ENCODE measurements at regions of chr17 and their contacts with region 1.

Region 1: DNA sequence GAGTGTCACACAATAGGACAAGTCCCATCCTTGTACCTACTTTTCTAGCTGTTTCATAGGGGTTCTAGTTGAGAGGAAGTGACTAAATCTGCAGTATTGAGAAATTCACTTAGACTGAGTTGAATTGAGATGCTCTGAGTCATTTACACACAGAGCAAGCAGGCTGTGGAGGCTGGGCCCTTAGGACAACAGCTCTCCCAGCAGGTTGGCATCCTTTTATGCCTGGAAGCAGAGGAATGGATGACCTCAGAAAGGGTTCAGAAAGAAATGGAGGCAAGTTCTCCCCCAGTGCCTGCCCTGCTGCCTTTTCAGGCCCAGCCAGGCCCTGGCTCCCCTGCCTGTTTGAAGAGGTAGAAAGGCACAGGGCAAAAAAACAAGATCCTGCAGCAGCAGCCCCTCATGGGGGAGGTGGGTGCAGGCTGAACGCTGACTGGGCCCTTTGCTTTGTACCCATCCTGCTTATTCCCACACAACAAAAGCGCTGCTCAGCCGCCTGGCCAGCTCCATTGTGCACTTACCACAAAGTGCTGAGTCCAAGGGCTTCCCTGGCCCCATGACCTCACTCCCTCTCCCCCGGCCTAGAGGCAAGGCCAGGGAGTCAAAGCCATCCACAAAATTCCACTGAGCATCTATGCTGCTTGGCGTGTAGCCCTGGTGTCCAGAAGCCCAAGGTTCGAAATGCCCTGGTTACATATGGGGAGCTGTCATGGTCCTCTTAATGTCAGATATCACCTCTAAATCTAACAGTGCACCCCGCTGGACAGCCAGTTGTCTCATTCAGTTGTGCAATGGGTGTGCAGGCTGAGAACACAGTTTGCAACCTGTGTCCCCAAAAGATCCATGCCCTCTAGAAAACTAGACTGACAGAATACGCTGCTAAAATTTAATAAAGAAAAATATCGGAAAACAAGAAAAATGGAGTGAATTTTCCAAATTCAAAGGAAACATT is 5.4 kb upstream of the CRYBA1 start:
- DNase-seq: peak; percentile 87
- ATAC-seq: peak; percentile 99
- H3K4me3 ChIP-seq: no peak overlapping the region
- H3K27ac ChIP-seq: peak overlapping the region; percentile 60
- H3K4me1 ChIP-seq: peaks cover 16% of the 10 kb centered on the region
- H3K27me3 ChIP-seq: no peaks in the 10 kb centered on the region
- CTCF ChIP-seq: no peak

Region 2: GRCh38 chr17:29252101-29252866 is 11.0 kb after region 1 on chr17:
- CTCF ChIA-PET with region 1: interaction called, 12 read pairs
- POLR2A ChIA-PET with region 1: no interaction called
- intact Hi-C with region 1: no loop called
- DNase-seq: peak; percentile 36
- ATAC-seq: no peak; the same call in 1 of the 2 replicates
- H3K4me3 ChIP-seq: no peak overlapping the region
- H3K27ac ChIP-seq: no peak overlapping the region
- H3K4me1 ChIP-seq: no peaks in the 10 kb centered on the region
- H3K27me3 ChIP-seq: no peaks in the 10 kb centered on the region
- CTCF ChIP-seq: peak; percentile 53

Measured in PC-3 (cell line).